ENCODE measurements at regions of chr1 and their contacts with region 1.

Region 1: GRCh38 chr1:192654591-192655251 is 18.8 kb downstream of the RGS13 start:
- DNase-seq: peak; percentile 33
- H3K4me3 Mint-ChIP-seq: no peak overlapping the region
- H3K27ac Mint-ChIP-seq: peak overlapping the region; percentile 43
- H3K4me1 Mint-ChIP-seq: peaks cover 13% of the 10 kb centered on the region
- H3K27me3 Mint-ChIP-seq: peaks cover 14% of the 10 kb centered on the region

Region 2: DNA sequence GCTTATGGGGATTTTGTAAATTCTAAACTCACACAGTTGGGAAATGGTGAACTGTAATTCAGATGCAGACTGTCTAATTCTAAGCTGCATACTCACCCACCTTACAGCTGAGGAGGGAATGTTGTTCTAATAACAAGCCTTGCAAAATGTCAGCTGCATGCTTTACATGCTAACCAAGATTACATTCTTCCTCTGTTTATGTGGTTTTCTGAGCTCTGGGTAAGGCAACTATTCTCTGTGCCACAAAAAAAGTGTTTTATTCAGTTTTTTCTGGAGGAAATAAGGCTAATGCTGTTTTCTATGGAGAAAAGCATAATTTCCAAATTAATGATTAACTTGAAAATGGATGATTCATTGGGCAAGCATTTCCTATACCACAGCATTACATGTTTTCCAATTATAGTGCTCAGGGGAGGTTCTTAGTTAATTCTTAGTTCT is 46.1 kb after region 1 on chr1:
- CTCF ChIA-PET with region 1: no interaction called
- POLR2A ChIA-PET with region 1: no interaction called
- intact Hi-C with region 1: loop called (anchors 1 kb)
- DNase-seq: no peak
- H3K4me3 Mint-ChIP-seq: no peak overlapping the region
- H3K27ac Mint-ChIP-seq: no peak overlapping the region
- H3K4me1 Mint-ChIP-seq: peaks cover 23% of the 10 kb centered on the region
- H3K27me3 Mint-ChIP-seq: no peaks in the 10 kb centered on the region

Region 3: GRCh38 chr1:192732787-192733186 is 78.1 kb after region 1 on chr1:
- CTCF ChIA-PET with region 1: no interaction called
- POLR2A ChIA-PET with region 1: no interaction called
- intact Hi-C with region 1: no loop called
- DNase-seq: no peak
- H3K4me3 Mint-ChIP-seq: no peak overlapping the region
- H3K27ac Mint-ChIP-seq: no peak overlapping the region
- H3K4me1 Mint-ChIP-seq: no peaks in the 10 kb centered on the region
- H3K27me3 Mint-ChIP-seq: no peaks in the 10 kb centered on the region